Esophagus squamous epithelium (tissue), 5 donors: ENCODE measurements at regions of chr6 and their contacts with region 1.

Region 1: DNA sequence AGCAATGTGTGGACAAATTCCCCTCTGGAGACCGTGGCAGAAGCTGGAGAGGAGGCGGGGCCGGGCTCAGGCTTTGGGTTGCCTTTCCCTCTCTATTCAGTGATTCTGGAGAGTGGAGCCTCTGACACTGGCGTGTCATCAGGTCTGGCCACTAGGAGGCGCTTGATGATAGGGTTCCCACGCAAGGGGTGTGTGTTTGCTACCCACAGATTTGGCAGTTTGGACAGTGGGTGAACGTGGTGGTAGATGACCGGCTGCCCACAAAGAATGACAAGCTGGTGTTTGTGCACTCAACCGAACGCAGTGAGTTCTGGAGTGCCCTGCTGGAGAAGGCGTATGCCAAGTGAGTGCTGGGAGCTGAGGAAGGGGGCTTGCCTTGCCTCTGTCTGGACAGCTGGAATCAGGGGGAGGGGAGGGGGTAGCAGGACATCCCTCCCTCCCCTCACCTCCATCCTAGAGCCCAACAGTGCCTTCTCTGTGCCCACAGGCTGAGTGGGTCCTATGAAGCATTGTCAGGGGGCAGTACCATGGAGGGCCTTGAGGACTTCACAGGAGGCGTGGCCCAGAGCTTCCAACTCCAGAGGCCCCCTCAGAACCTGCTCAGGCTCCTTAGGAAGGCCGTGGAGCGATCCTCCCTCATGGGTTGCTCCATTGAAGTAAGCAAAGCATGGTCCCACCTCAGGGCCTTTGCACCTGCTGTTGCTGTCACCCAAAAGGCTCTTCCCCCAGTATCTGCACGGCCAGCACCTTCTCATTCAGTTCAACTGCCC is 14.3 kb downstream of the CAPN11 start:
- DNase-seq: peak; percentile 13
- H3K4me3 ChIP-seq: no peak overlapping the region
- H3K27ac ChIP-seq: no peak overlapping the region
- H3K4me1 ChIP-seq: peaks cover 0 to 37% (median 12%) of the 10 kb centered on the region in 3 donors
- H3K27me3 ChIP-seq: peaks cover 0 to 8% (median 0%) of the 10 kb centered on the region in 4 donors
- CTCF ChIP-seq: peak; percentile 81 to 94 (median 88)
- POLR2A ChIP-seq: no peak

Region 2: GRCh38 chr6:44074439-44075136 is 98.3 kb before region 1 on chr6:
- intact Hi-C with region 1: no loop called
- DNase-seq: no peak
- H3K4me3 ChIP-seq: peak overlapping the region in 3 of 4 donors; percentile 52 to 71 (median 54)
- H3K27ac ChIP-seq: peak overlapping the region; percentile 56 to 83 (median 80)
- H3K4me1 ChIP-seq: peaks cover 37 to 78% (median 44%) of the 10 kb centered on the region in 3 donors
- H3K27me3 ChIP-seq: peaks cover 0 to 13% (median 0%) of the 10 kb centered on the region in 4 donors
- CTCF ChIP-seq: peak; percentile 85 to 97 (median 91)
- POLR2A ChIP-seq: no peak

Region 3: DNA sequence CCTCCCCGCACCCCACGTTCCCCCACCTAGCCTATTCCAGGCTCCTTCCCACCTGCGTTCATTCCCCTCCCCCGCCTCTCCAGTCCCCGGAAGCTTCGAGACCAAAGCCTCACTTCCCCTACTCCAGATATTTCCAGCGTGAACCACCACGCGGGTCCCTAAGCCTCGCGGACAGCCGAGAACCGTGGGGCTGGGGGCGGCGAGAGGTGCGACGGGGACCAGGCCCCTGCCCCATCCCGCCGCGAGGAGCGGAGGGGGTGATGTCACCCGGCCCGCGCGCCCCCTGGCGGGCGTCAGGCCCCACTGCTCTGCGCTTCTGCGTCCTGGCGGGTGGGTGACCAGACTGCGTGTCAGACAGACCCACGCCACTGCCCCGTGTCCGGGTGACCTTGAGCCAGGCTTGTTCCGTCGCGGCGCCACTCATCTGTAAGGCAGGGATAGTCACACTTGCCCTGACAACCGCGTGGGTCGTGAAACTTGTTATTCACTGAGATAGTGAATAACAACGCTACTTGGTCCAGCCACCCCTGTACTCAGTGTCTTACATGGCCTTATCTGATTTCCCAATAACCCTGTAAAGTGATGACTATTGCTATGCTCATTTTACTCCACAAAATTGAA is 65.0 kb after region 1 on chr6:
- intact Hi-C with region 1: loop called (anchors 5 kb)
- DNase-seq: no peak
- H3K4me3 ChIP-seq: peak overlapping the region; percentile 43 to 89 (median 65)
- H3K27ac ChIP-seq: peak overlapping the region; percentile 87 to 99 (median 96)
- H3K4me1 ChIP-seq: peaks cover 6 to 53% (median 38%) of the 10 kb centered on the region in 3 donors
- H3K27me3 ChIP-seq: no peaks in the 10 kb centered on the region
- CTCF ChIP-seq: peak; percentile 95 to 99 (median 98)
- POLR2A ChIP-seq: peak in 2 of 4 donors; percentile 32 to 44

Region 4: GRCh38 chr6:44257025-44257752 is 84.3 kb after region 1 on chr6 and contains the start of gene SLC35B2:
- intact Hi-C with region 1: loop called (anchors 5 kb)
- DNase-seq: no peak
- H3K4me3 ChIP-seq: peak within 1 kb of the TSS; percentile 70 to 98 (median 90)
- H3K27ac ChIP-seq: peak within 1 kb of the TSS; percentile 84 to 94 (median 90)
- H3K4me1 ChIP-seq: peaks cover 14 to 61% (median 14%) of the 10 kb centered on the region in 3 donors
- H3K27me3 ChIP-seq: no peaks in the 10 kb centered on the region
- CTCF ChIP-seq: peak; percentile 52 to 87 (median 72)
- POLR2A ChIP-seq: peak in 2 of 4 donors; percentile 71 to 74
- total RNA-seq, gene SLC35B2: 9.7 to 34.4 (median 21.2) TPM